ENCODE measurements at regions of chr2 and their contacts with region 1.

Region 1: GRCh38 chr2:187102381-187102780 is 253.4 kb upstream of the ZSWIM2 start:
- DNase-seq: no peak
- H3K27ac ChIP-seq: no peak overlapping the region
- CTCF ChIP-seq: no peak

Region 2: GRCh38 chr2:187017438-187017837 is 84.9 kb before region 1 on chr2:
- CTCF ChIA-PET with region 1: interaction called, 11 read pairs
- POLR2A ChIA-PET with region 1: no interaction called
- DNase-seq: no peak
- H3K27ac ChIP-seq: no peak overlapping the region
- CTCF ChIP-seq: no peak

Region 3: GRCh38 chr2:187117483-187117882 is 15.1 kb after region 1 on chr2:
- CTCF ChIA-PET with region 1: no interaction called
- POLR2A ChIA-PET with region 1: no interaction called
- DNase-seq: no peak
- H3K27ac ChIP-seq: no peak overlapping the region
- CTCF ChIP-seq: no peak

Measured in RWPE1 (cell line).